ENCODE measurements at regions of chr6 and their contacts with region 1.

Region 1: DNA sequence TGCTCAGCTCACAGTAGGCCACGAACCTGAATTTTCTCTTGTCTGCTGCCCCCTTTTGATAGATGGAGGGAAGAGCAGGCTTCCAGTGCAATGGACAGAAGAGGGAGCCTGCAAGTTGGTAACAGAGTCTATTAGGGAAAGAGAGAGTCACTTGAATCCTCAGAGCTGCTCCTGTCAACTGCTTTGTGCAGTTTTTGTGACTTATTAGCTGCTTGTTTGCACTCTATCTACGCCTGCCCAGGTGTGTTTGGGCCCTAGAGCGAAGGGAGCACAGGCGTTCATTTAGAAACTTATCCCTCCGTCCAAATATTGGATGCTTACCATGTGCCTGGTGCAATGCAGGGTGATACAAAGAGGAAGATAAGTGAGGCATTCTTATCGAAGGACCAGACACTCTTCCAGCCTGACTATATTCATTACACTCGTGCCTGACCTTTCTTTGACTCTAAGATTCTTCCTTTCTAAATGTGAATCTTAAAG is 11.6 kb upstream of the SLC2A12 start:
- DNase-seq: peak; percentile 80
- H3K4me3 ChIP-seq: no peak overlapping the region
- H3K27ac ChIP-seq: no peak overlapping the region
- H3K4me1 ChIP-seq: peaks cover 10% of the 10 kb centered on the region
- H3K27me3 ChIP-seq: no peaks in the 10 kb centered on the region
- CTCF ChIP-seq: peak; percentile 85 to 89
- POLR2A ChIP-seq: no peak

Region 2: GRCh38 chr6:133939778-133940667 is 124.0 kb before region 1 on chr6:
- CTCF ChIA-PET with region 1: interaction called, 13 read pairs
- POLR2A ChIA-PET with region 1: no interaction called
- dilution Hi-C with region 1: no loop called
- intact Hi-C with region 1: no loop called
- DNase-seq: no peak
- H3K4me3 ChIP-seq: no peak overlapping the region
- H3K27ac ChIP-seq: no peak overlapping the region
- H3K4me1 ChIP-seq: no peaks in the 10 kb centered on the region
- H3K27me3 ChIP-seq: peaks cover 7 to 16% of the 10 kb centered on the region in 2 experiments
- CTCF ChIP-seq: no peak
- POLR2A ChIP-seq: no peak

Region 3: DNA sequence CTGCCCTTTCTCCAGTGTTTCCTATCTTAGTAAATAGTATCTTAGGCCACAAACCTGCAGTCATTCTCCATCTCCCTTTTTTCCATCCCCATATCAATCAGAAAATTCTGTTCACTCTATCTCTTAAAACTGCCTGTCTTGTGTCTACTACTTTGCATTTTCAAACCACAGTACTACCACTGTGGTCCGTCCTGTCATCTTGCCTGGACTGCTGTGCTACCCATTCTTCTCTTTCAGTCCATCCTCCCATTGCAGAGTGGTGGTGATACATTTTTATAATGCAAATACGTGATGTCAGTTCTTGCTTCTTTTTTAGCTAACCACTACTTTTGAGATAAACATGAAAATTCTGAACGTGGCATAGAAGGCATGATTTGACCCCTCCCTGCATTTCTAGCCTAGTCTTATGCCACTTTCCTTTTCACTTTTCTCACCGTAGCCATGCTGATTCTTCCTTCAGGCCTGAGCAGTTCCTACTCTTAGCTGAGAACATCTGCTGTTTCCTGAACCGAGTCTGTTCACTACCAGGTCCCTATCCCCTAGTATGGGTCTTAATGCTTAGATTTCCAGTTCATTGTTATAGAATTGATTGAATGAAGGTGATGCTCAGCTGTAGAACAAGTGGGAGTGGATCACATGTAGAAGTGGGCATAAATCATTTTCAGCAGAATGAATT is 97.2 kb before region 1 on chr6:
- CTCF ChIA-PET with region 1: interaction called, 10 read pairs
- POLR2A ChIA-PET with region 1: no interaction called
- dilution Hi-C with region 1: no loop called
- intact Hi-C with region 1: no loop called
- DNase-seq: no peak
- H3K4me3 ChIP-seq: no peak overlapping the region
- H3K27ac ChIP-seq: no peak overlapping the region
- H3K4me1 ChIP-seq: peaks cover 6% of the 10 kb centered on the region
- H3K27me3 ChIP-seq: no peaks in the 10 kb centered on the region
- CTCF ChIP-seq: no peak
- POLR2A ChIP-seq: no peak

Region 4: DNA sequence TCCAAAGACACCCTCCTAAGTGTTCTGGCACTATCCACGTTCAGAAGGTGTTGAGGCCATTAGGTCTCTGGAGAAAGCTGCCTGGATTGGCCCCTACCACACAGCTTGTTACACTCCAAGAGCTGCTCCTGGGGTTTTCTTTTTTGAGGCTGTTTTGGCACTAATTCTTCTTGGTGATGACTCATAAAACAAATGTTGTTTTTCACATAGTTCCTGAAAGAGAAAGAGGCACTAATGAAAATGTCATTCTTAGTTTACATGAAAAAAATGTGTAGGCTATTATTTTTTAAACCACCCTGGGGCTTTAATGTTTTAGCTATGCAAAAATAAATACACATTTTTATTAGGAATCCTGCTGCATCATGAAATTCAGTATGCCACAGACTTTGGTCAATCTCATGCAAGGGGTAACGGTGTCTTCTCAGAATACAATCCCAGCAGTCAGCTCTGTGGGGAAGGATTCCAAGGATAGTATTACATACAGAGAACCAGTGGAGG is 72.9 kb before region 1 on chr6:
- CTCF ChIA-PET with region 1: interaction called, 35 read pairs
- POLR2A ChIA-PET with region 1: no interaction called
- dilution Hi-C with region 1: no loop called
- intact Hi-C with region 1: no loop called
- DNase-seq: peak; percentile 80
- H3K4me3 ChIP-seq: no peak overlapping the region
- H3K27ac ChIP-seq: no peak overlapping the region
- H3K4me1 ChIP-seq: peaks cover 11% of the 10 kb centered on the region
- H3K27me3 ChIP-seq: no peaks in the 10 kb centered on the region
- CTCF ChIP-seq: no peak
- POLR2A ChIP-seq: no peak

Region 5: DNA sequence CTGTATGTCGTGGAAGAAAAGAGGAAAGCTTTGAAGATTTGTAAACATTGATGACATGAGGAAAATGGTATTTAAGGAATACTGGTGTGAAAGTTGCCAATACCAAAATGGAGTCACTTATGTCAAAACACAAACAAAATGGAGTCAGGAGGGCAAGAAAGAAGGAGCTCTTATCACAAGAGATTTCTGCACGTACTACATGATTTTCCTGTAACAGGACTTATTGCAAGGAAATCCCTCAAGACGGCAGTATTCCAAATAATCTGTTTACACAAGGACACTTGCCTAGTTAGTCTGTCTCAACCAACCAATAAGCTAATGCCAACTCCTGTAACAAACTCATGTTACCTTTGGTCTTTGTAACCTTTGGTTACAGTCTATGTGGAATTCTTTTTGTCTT is 41.4 kb before region 1 on chr6:
- CTCF ChIA-PET with region 1: interaction called, 10 read pairs
- POLR2A ChIA-PET with region 1: no interaction called
- dilution Hi-C with region 1: no loop called
- intact Hi-C with region 1: no loop called
- DNase-seq: no peak
- H3K4me3 ChIP-seq: no peak overlapping the region
- H3K27ac ChIP-seq: no peak overlapping the region
- H3K4me1 ChIP-seq: no peaks in the 10 kb centered on the region
- H3K27me3 ChIP-seq: peaks cover 2 to 5% of the 10 kb centered on the region in 2 experiments
- CTCF ChIP-seq: no peak
- POLR2A ChIP-seq: no peak

Region 6: DNA sequence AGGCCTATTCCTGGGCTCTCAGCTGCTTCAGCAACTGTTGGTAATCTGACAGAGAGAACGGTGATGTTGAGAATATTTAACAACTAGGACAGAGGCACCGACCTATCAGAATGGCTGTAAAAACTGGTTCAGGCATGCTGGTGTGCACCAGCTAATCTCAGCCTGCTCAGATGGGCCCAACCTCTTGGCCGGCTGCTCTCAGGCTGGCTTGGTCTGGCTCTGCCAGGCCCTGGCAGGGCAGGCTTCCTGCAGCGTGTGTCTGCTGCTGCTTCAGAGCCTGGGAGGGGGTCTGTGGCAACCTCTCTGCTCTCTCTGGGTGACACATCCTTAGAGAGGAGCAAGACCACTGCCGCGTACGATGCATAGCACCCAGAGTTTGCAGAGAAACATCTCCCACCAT is 16.3 kb before region 1 on chr6:
- CTCF ChIA-PET with region 1: interaction called, 44 read pairs
- POLR2A ChIA-PET with region 1: no interaction called
- dilution Hi-C with region 1: no loop called
- intact Hi-C with region 1: loop called (anchors 1 kb)
- DNase-seq: no peak
- H3K4me3 ChIP-seq: no peak overlapping the region
- H3K27ac ChIP-seq: no peak overlapping the region
- H3K4me1 ChIP-seq: peaks cover 2% of the 10 kb centered on the region
- H3K27me3 ChIP-seq: no peaks in the 10 kb centered on the region
- CTCF ChIP-seq: no peak
- POLR2A ChIP-seq: no peak

Region 7: DNA sequence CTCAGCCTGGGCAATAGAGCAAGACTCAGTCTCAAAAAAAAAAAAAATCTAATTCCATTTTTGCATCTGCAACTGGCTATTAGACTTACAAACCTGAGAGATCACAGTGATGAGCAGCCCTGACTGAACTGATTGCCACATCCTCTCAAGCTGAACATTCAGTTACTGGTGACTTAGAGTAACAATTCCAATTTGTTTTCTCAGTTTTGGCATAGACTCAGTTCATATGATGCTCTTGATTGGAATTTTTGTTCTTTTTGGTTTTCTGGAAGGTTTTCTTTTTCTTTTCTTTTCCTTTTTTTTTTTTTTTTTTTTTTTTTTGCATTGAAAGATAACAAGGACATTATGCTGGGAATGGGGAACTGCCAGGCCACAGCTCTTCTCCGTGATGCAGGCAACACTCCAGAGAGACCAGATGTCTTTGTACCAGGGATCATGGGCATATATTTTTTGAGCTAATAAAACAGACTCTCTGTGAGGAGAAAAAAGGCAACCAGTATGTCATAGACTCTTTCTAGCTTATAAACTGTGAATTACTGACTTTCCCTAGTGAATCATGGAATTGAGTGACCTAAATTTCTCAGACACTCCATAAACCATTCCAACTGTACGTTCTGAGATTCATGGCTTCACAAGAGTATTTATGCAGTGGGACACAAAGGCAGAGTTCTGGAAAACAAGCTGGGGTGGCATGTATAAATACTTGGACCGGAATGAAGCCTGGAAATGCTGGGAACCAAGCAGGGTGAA is 74.4 kb after region 1 on chr6:
- CTCF ChIA-PET with region 1: no interaction called
- POLR2A ChIA-PET with region 1: no interaction called
- dilution Hi-C with region 1: no loop called
- intact Hi-C with region 1: no loop called
- DNase-seq: no peak
- H3K4me3 ChIP-seq: no peak overlapping the region
- H3K27ac ChIP-seq: no peak overlapping the region
- H3K4me1 ChIP-seq: no peaks in the 10 kb centered on the region
- H3K27me3 ChIP-seq: peaks cover 0 to 2% of the 10 kb centered on the region in 2 experiments
- CTCF ChIP-seq: no peak
- POLR2A ChIP-seq: no peak

Region 8: GRCh38 chr6:135115834-135116233 is 1051.8 kb after region 1 on chr6:
- CTCF ChIA-PET with region 1: no interaction called
- POLR2A ChIA-PET with region 1: interaction called, 10 read pairs
- dilution Hi-C with region 1: no loop called
- intact Hi-C with region 1: no loop called
- DNase-seq: no peak
- H3K4me3 ChIP-seq: no peak overlapping the region
- H3K27ac ChIP-seq: no peak overlapping the region
- H3K4me1 ChIP-seq: no peaks in the 10 kb centered on the region
- H3K27me3 ChIP-seq: peaks cover 12 to 15% of the 10 kb centered on the region in 2 experiments
- CTCF ChIP-seq: no peak
- POLR2A ChIP-seq: no peak